K562 (cell line): ENCODE measurements at regions of chr7 and their contacts with region 1.

Region 1: DNA sequence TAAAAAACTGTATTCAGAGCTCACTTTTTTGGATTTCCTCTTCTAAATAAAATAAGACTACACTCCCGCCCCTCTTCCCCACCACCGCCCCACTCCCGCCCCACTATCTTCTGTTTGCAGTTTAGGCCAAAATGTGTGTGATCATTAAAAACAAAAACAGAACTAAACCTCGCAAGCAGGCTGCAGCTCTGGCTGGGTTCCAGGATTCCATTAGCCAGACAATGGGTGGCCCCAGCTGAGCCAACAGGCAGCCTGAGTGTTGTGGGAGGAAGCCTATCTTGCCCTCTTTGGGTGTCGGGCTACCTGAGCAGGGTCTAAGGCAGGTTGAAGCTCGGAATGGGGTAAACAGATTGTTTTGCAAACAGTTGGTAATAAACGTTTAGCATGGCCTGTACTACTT is 41.7 kb downstream of the ARL4A start:
- DNase-seq: peak; percentile 80 to 98 (median 82)
- ATAC-seq: peak; percentile 71
- H3K4me3 ChIP-seq: no peak overlapping the region
- H3K27ac ChIP-seq: peak overlapping the region; percentile 95
- H3K4me1 ChIP-seq: peaks cover 8 to 62% of the 10 kb centered on the region in 2 experiments
- H3K27me3 ChIP-seq: no peaks in the 10 kb centered on the region
- CTCF ChIP-seq: 0 out of 6 replicates have a peak, but pooled peaks of 1 of the 3 experiments have one; percentile 1
- EP300 ChIP-seq: peak; percentile 87
- POLR2A ChIP-seq: no peak
- RAD21 ChIP-seq: no peak; a peak in 2 of 4 replicates

Region 2: GRCh38 chr7:12814828-12815227 is 85.7 kb after region 1 on chr7:
- CTCF ChIA-PET with region 1: no interaction called
- POLR2A ChIA-PET with region 1: no interaction called
- in situ Hi-C with region 1: no loop called
- intact Hi-C with region 1: loop called (anchors 5 kb)
- DNase-seq: peak in 2 of 4 experiments; percentile 26 to 44
- ATAC-seq: peak; percentile 63
- H3K4me3 ChIP-seq: no peak overlapping the region
- H3K27ac ChIP-seq: no peak overlapping the region; the same call in 1 of the 3 replicates
- H3K4me1 ChIP-seq: peaks cover 0 to 5% of the 10 kb centered on the region in 2 experiments; a peak in 1 of 5 replicates
- H3K27me3 ChIP-seq: no peaks in the 10 kb centered on the region
- CTCF ChIP-seq: no peak
- EP300 ChIP-seq: no peak
- POLR2A ChIP-seq: no peak
- RAD21 ChIP-seq: no peak

Region 3: GRCh38 chr7:12907774-12908173 is 178.7 kb after region 1 on chr7:
- CTCF ChIA-PET with region 1: no interaction called
- POLR2A ChIA-PET with region 1: no interaction called
- in situ Hi-C with region 1: no loop called
- intact Hi-C with region 1: no loop called
- DNase-seq: no peak
- ATAC-seq: no peak; the same call in 1 of the 3 replicates
- H3K4me3 ChIP-seq: no peak overlapping the region
- H3K27ac ChIP-seq: no peak overlapping the region
- H3K4me1 ChIP-seq: peaks cover 0 to 1% of the 10 kb centered on the region in 2 experiments; a peak in 1 of 5 replicates
- H3K27me3 ChIP-seq: no peaks in the 10 kb centered on the region
- CTCF ChIP-seq: no peak
- EP300 ChIP-seq: no peak
- POLR2A ChIP-seq: no peak
- RAD21 ChIP-seq: no peak

Region 4: DNA sequence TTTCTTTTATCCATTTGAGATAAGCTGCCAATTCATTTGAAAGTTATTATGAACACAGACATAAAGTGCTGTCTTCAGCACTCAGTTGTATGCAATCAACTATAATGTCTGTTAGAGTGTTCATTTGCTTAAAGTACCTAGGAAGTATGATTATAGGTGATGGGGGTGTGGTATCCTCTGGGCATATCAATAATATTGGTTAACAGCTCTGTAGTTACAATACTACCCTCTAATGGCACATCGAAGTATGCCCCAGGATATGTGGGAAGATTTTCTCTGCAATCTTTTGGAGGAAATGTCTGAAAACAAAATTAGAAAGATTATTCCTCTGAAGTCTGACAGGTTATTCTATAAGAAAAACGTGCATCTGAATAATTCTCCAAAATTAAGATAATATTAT is 388.0 kb after region 1 on chr7:
- CTCF ChIA-PET with region 1: no interaction called
- POLR2A ChIA-PET with region 1: interaction called, 3 read pairs
- in situ Hi-C with region 1: no loop called
- intact Hi-C with region 1: loop called (anchors 2 kb)
- DNase-seq: peak in 1 of 4 experiments; percentile 22
- ATAC-seq: peak; percentile 64; the same call in 1 of the 3 replicates
- H3K4me3 ChIP-seq: no peak overlapping the region
- H3K27ac ChIP-seq: no peak overlapping the region
- H3K4me1 ChIP-seq: peaks cover 0 to 11% of the 10 kb centered on the region in 2 experiments; a peak in 2 of 5 replicates
- H3K27me3 ChIP-seq: no peaks in the 10 kb centered on the region
- CTCF ChIP-seq: peak; percentile 16 to 48 (median 28); a peak in 2 of 6 replicates
- EP300 ChIP-seq: no peak
- POLR2A ChIP-seq: no peak
- RAD21 ChIP-seq: peak; percentile 65 to 78